Motor neuron (in vitro differentiated cells): ENCODE measurements at regions of chr3 and their contacts with region 1.

Region 1: GRCh38 chr3:194315088-194315964 is 35.8 kb downstream of the CPN2 start:
- ATAC-seq: peak; percentile 84 to 90 (median 87)
- H3K4me3 ChIP-seq: peak overlapping the region; percentile 0 to 21 (median 14)
- H3K27ac ChIP-seq: peak overlapping the region in 1 of 2 donors; percentile 33
- H3K4me1 ChIP-seq: peaks cover 24 to 26% of the 10 kb centered on the region in 2 donors

Region 2: DNA sequence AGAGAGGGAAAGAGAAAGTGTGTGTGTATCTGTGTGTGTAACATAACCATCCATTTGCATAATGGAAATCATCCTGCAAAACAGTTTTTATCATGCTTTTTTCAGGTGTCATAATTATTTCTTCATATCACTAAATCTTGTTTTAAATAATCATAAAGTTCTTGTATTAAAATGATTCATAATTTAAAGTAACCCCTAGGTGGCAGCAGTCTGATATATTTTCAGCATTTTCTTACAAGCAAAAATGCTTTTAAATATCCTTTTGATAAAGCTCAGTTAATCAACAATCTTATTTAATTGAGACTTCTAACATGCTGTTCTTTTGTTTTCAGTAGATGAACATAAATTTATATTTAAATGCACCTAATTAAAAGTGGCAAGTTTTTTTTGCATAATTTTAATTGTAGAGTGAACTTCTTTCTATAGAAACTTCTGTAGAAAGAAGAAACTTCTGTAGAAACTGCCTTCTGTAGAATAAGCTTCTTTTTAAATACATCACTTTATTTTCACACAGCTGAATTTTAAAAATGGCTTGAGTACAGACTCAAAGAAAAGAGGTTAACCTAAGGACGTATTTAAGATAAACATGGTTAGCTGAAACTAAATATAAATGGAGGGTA is 649.8 kb before region 1 on chr3:
- in situ Hi-C with region 1: loop called in 3 of 9 experiments (anchors 10 to 25 kb)
- ATAC-seq: no peak
- H3K4me3 ChIP-seq: no peak overlapping the region
- H3K27ac ChIP-seq: no peak overlapping the region
- H3K4me1 ChIP-seq: no peaks in the 10 kb centered on the region

Region 3: DNA sequence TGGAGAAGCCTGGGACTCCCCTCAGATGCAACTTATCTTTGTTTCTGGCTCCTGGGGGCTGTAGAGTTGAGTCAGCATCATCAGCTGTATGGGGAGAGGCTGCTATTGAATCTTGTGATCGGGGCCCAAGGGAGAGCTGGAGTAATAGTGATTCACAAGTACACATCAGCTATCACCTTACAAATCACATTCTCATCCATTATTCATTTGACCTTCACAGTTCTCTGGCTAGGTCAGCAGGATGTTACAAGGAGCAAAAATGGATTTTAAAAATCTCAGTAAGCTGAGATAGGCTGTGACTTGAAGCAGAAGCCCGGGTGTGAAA is 547.3 kb before region 1 on chr3:
- in situ Hi-C with region 1: loop called in 1 of 9 experiments (anchors 25 kb)
- ATAC-seq: peak in 7 of 8 experiments; percentile 34 to 84 (median 63)
- H3K4me3 ChIP-seq: no peak overlapping the region
- H3K27ac ChIP-seq: peak overlapping the region in 1 of 2 donors; percentile 11
- H3K4me1 ChIP-seq: peaks cover 37% of the 10 kb centered on the region in 2 donors

Region 4: GRCh38 chr3:193788189-193788991 is 526.9 kb before region 1 on chr3:
- in situ Hi-C with region 1: loop called in 8 of 9 experiments (anchors 5 to 25 kb)
- ATAC-seq: peak; percentile 87 to 98 (median 94)
- H3K4me3 ChIP-seq: no peak overlapping the region
- H3K27ac ChIP-seq: peak overlapping the region in 1 of 2 donors; percentile 16
- H3K4me1 ChIP-seq: peaks cover 36 to 40% of the 10 kb centered on the region in 2 donors

Region 5: DNA sequence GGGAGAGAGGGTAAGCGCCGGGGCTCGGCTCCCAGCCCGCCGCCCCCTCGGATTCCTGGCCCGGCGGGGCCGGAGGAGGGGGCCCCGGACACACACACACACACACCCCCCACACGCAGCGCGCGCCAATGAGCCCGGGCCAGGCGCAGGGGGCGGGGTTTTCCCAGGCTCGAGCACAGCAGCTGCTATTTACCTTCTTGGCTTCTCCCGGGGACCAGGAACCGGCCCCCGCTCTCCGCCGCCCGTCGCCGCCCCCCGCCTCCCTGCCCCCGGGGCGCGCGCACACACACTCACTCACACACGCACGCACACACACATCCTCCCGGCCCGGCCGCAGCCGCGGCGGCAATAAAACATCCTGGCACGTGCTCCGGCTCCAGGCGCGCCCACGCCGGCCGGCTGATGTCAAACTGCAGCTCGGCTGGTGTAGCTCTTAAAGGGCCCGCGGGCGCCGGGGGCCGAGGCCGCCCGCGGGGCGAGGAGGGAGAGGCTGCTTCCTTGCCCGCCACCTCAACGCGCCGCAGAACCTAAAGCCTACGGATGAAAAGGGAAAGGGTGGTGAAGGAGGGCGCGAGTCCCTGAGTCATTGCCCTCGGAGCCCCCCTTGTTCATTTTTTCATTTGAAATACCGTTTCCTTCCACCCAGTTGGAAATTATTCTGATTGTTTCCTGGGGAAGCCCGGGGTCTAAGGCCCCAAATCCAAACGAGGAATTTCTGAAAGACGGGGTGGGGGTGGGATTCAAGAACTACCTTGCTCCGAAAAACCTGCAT is 180.4 kb before region 1 on chr3:
- in situ Hi-C with region 1: loop called in 4 of 9 experiments (anchors 10 to 25 kb)
- ATAC-seq: peak; percentile 32 to 79 (median 70)
- H3K4me3 ChIP-seq: peak overlapping the region; percentile 35 to 57 (median 50)
- H3K27ac ChIP-seq: peak overlapping the region; percentile 69 to 92
- H3K4me1 ChIP-seq: peaks cover 42 to 48% of the 10 kb centered on the region in 2 donors

Region 6: GRCh38 chr3:194738254-194739093 is 423.1 kb after region 1 on chr3:
- in situ Hi-C with region 1: no loop called
- ATAC-seq: peak in 2 of 8 experiments; percentile 45
- H3K4me3 ChIP-seq: no peak overlapping the region
- H3K27ac ChIP-seq: no peak overlapping the region
- H3K4me1 ChIP-seq: no peaks in the 10 kb centered on the region